Panc1 (cell line): ENCODE measurements at regions of chr1 and their contacts with region 1.

Region 1: GRCh38 chr1:117534995-117535467 is 70.8 kb upstream of the TENT5C start:
- DNase-seq: no peak
- ATAC-seq: peak; percentile 78; the same call in 1 of the 2 replicates
- H3K4me3 ChIP-seq: no peak overlapping the region
- H3K27ac ChIP-seq: no peak overlapping the region
- H3K4me1 ChIP-seq: no peaks in the 10 kb centered on the region
- H3K27me3 ChIP-seq: no peaks in the 10 kb centered on the region
- CTCF ChIP-seq: peak; percentile 74

Region 2: GRCh38 chr1:117501281-117501680 is 33.8 kb before region 1 on chr1:
- CTCF ChIA-PET with region 1: no interaction called
- POLR2A ChIA-PET with region 1: no interaction called
- in situ Hi-C with region 1: no loop called
- intact Hi-C with region 1: no loop called
- DNase-seq: no peak
- ATAC-seq: no peak
- H3K4me3 ChIP-seq: no peak overlapping the region
- H3K27ac ChIP-seq: no peak overlapping the region
- H3K4me1 ChIP-seq: no peaks in the 10 kb centered on the region
- H3K27me3 ChIP-seq: no peaks in the 10 kb centered on the region
- CTCF ChIP-seq: no peak

Region 3: GRCh38 chr1:117572546-117572945 is 37.5 kb after region 1 on chr1:
- CTCF ChIA-PET with region 1: no interaction called
- POLR2A ChIA-PET with region 1: no interaction called
- in situ Hi-C with region 1: no loop called
- intact Hi-C with region 1: no loop called
- DNase-seq: no peak
- ATAC-seq: no peak
- H3K4me3 ChIP-seq: no peak overlapping the region
- H3K27ac ChIP-seq: no peak overlapping the region
- H3K4me1 ChIP-seq: no peaks in the 10 kb centered on the region
- H3K27me3 ChIP-seq: no peaks in the 10 kb centered on the region
- CTCF ChIP-seq: no peak

Region 4: GRCh38 chr1:117674521-117675397 is 139.7 kb after region 1 on chr1:
- CTCF ChIA-PET with region 1: no interaction called
- POLR2A ChIA-PET with region 1: no interaction called
- in situ Hi-C with region 1: no loop called
- intact Hi-C with region 1: loop called (anchors 10 kb)
- DNase-seq: peak; percentile 22
- ATAC-seq: peak; percentile 50; the same call in 1 of the 2 replicates
- H3K4me3 ChIP-seq: no peak overlapping the region
- H3K27ac ChIP-seq: no peak overlapping the region
- H3K4me1 ChIP-seq: peaks cover 3% of the 10 kb centered on the region; the same call in 1 of the 2 replicates
- H3K27me3 ChIP-seq: no peaks in the 10 kb centered on the region
- CTCF ChIP-seq: peak; percentile 40

Region 5: GRCh38 chr1:117942293-117942692 is 407.3 kb after region 1 on chr1:
- CTCF ChIA-PET with region 1: no interaction called
- POLR2A ChIA-PET with region 1: no interaction called
- in situ Hi-C with region 1: no loop called
- intact Hi-C with region 1: no loop called
- DNase-seq: no peak
- ATAC-seq: no peak
- H3K4me3 ChIP-seq: no peak overlapping the region
- H3K27ac ChIP-seq: no peak overlapping the region
- H3K4me1 ChIP-seq: no peaks in the 10 kb centered on the region
- H3K27me3 ChIP-seq: no peaks in the 10 kb centered on the region
- CTCF ChIP-seq: no peak